Left colon (tissue), 2 donors: ENCODE measurements at regions of chr1 and their contacts with region 1.

Region 1: DNA sequence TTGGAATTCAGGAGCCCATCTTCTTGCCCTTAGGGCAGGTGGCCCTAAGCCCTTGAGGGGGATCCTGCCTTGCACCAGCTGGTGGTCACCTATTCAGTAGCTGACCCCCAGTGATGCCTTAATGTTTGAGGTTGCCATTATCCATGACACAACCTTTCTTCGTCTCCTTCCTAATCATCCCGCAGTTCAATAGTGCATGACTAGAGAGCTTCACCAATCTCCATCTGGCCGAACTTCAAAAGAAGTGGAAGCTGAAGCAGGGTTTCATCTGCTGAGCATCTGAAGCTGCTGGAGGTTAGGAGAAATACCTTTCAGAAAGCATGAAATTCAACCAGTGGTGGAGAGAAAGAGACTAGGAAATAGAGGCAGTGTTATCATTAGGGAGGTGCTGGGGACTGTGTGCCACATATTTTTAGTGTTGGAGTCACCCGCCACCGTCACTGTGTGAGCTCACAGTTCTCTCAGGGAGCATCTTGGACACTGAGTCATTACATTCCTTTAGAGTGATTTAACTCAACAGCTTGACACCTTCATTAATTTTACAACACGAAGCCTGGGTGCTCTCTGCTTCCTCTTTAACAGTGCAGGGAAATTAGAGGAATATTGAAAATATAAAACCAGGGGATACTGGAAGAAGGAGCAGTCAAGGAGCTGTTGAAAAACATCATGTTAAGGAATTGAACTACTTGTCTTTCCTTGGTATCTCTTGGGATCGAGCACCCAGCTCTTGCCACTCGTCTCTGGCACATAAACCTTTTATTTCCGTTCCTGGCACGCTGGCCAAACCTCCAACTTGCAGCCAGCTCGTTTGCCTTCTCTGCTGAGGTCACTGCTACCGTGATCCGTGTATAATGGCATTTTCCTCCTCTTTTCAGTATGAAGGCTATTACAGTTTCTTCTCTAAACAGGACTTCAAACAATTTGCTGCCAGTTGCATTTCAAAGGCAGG is 53.6 kb downstream of the PEX14 start:
- DNase-seq: no peak
- ATAC-seq: peak; percentile 39

Region 2: DNA sequence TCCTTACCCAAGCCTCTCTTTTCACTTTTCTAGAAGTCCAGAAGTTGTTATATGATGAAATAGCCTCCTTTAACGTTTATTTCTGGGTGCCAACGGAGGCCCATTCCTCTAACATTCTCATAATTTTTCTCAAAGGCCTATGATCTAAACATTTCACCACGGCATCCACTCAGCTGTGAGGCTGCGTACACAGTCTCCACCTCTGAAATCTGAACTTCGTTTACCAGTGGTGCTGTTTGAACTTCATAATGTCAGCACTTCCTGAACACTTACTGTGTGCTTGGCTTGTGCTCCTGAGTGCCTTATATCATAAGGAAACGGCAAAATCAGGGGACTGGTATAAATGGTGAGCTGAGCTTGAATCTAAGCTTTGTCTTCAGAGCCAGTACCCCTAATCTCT is 543.3 kb before region 1 on chr1:
- intact Hi-C with region 1: no loop called
- DNase-seq: no peak
- ATAC-seq: no peak

Region 3: DNA sequence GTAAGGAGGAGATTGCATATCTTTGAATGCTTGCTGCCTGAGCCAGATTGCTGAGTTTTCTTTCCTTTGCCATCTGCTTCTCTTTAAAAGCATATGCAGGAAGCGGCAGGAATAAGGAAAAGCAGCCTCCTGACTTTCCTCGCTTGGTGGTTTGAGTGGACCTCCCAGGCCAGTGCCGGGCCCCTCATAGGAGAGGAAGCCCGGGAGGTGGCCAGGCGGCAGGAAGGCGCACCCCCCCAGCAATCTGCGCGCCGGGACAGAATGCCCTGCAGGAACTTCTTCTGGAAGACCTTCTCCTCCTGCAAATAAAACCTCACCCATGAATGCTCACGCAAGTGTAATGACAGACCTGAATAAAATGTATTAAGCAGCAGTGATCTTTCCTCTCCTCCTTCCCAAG is 77.1 kb before region 1 on chr1:
- intact Hi-C with region 1: no loop called
- DNase-seq: no peak
- ATAC-seq: no peak

Region 4: DNA sequence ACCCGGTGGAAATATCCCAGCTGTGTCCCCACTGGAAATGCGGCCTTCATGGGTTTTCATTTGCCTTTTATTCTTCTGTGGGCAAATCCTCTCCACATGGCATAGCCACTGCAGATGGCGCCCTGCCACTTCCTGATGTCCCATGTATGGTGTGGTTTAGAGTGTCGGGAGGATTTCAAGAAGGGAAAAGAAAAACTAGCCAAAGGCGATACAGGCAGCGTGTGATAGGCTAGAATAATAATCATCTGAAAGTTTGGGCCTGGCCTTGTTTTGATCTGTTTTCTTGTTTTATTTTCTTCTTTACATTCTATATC is 70.0 kb after region 1 on chr1:
- intact Hi-C with region 1: no loop called
- DNase-seq: peak in 1 of 2 donors; percentile 21
- ATAC-seq: peak; percentile 38

Region 5: GRCh38 chr1:10635085-10635896 is 107.0 kb after region 1 on chr1:
- intact Hi-C with region 1: loop called in 1 of 2 experiments (anchors 10 kb)
- DNase-seq: peak in 1 of 2 donors; percentile 47
- ATAC-seq: peak; percentile 59